ENCODE measurements at regions of chr21 and their contacts with region 1.

Region 1: DNA sequence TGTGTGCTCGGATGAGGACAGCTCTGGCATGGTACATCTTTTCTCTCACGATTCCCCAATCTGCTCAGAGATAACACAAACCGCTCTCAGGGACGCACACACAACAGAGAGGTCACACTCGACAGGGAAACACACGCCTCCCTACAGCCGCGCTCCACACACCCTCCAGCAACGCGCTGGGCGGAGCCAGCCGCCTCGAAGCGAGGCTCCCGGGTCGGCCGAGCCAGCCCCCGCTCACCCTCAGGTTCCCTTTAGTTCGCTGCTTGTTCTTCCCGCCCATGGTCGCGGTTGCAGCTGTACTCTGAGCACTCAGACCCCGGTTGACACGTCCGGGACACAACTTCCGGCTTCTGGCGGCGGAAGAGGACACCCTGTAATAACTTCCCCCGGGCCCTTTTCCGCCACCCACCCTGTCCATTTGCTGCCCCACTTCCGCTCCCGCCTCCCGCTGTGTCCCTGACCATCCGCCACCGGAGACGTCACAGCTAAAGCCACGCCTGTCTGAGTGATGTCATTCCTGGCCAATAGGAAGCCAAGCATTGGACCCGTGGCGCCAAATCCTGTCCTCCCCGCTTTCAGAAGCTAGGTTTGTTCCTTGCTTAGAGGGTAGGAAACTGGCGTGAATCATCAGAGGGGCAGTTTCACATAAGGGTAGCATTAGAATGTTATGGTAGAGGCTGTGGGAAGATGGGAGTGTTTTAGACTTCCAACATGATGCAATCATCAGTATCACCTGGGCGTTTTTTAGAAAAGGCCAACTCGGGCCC is at the start of gene LTN1:
- DNase-seq: peak; percentile 96
- H3K4me3 ChIP-seq: peak within 1 kb of the TSS; percentile 89 to 91
- H3K27ac ChIP-seq: peak within 1 kb of the TSS; percentile 82 to 83
- H3K4me1 ChIP-seq: peaks cover 0 to 20% of the 10 kb centered on the region in 2 experiments; a peak in 2 of 4 replicates
- H3K27me3 ChIP-seq: no peaks in the 10 kb centered on the region
- CTCF ChIP-seq: no peak
- EP300 ChIP-seq: no peak
- RAD21 ChIP-seq: no peak
- polyA plus RNA-seq, gene LTN1: 3.2 and 4.8 TPM in 2 replicates

Region 2: GRCh38 chr21:29024474-29025327 is 32.0 kb after region 1 on chr21 and contains the start of gene USP16:
- CTCF ChIA-PET with region 1: no interaction called
- POLR2A ChIA-PET with region 1: interaction called, 15 read pairs
- DNase-seq: peak; percentile 95
- H3K4me3 ChIP-seq: peak within 1 kb of the TSS; percentile 69 to 70
- H3K27ac ChIP-seq: peak within 1 kb of the TSS; percentile 97
- H3K4me1 ChIP-seq: peaks cover 3 to 15% of the 10 kb centered on the region in 2 experiments; a peak in 3 of 4 replicates
- H3K27me3 ChIP-seq: no peaks in the 10 kb centered on the region
- CTCF ChIP-seq: peak; percentile 12; the same call in 1 of the 2 replicates
- EP300 ChIP-seq: no peak; a peak in 2 of 4 replicates
- RAD21 ChIP-seq: no peak
- polyA plus RNA-seq, gene USP16: 9.2 and 12.2 TPM in 2 replicates

Region 3: GRCh38 chr21:30882866-30883597 is 1890.3 kb after region 1 on chr21:
- CTCF ChIA-PET with region 1: no interaction called
- POLR2A ChIA-PET with region 1: no interaction called
- DNase-seq: no peak
- H3K4me3 ChIP-seq: no peak overlapping the region
- H3K27ac ChIP-seq: no peak overlapping the region
- H3K4me1 ChIP-seq: no peaks in the 10 kb centered on the region
- H3K27me3 ChIP-seq: no peaks in the 10 kb centered on the region
- CTCF ChIP-seq: no peak
- EP300 ChIP-seq: no peak
- RAD21 ChIP-seq: no peak

Measured in SK-N-SH (cell line).